Common myeloid progenitor, CD34-positive (primary cell): ENCODE measurements at regions of chr6 and their contacts with region 1.

Region 1: GRCh38 chr6:35202066-35202546 is 11.7 kb upstream of the SCUBE3 start:
- DNase-seq: peak in 2 of 3 donors; percentile 21 to 22
- H3K4me3 ChIP-seq: no peak overlapping the region
- H3K27ac ChIP-seq: no peak overlapping the region
- H3K4me1 ChIP-seq: no peaks in the 10 kb centered on the region
- H3K27me3 ChIP-seq: peaks cover 0 to 13% (median 8%) of the 10 kb centered on the region in 5 experiments

Region 2: DNA sequence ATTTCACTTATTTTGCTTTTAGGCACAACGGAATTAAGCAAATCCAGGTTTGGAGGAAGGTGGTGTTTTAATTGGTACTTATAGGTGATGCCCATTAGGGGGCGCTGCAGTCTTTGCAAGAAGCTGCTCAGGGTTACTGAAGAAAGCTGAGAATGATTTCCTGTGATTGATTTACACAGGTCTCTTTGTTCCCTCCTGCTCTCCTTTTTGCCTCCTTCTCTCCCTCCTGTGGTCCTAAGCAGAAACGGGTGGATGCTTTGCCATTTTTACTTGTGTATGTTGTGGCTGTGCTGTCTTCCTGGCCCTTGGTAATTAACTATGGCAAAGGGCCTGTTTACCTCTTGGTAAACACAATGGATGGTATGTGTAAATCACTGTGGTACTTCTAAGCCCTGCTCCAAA is 215.3 kb before region 1 on chr6:
- CTCF ChIA-PET with region 1: interaction called, 34 read pairs
- POLR2A ChIA-PET with region 1: no interaction called
- DNase-seq: peak; percentile 76 to 89 (median 88)
- H3K4me3 ChIP-seq: no peak overlapping the region
- H3K27ac ChIP-seq: no peak overlapping the region
- H3K4me1 ChIP-seq: peaks cover 0 to 6% (median 5%) of the 10 kb centered on the region in 4 experiments
- H3K27me3 ChIP-seq: no peaks in the 10 kb centered on the region

Region 3: DNA sequence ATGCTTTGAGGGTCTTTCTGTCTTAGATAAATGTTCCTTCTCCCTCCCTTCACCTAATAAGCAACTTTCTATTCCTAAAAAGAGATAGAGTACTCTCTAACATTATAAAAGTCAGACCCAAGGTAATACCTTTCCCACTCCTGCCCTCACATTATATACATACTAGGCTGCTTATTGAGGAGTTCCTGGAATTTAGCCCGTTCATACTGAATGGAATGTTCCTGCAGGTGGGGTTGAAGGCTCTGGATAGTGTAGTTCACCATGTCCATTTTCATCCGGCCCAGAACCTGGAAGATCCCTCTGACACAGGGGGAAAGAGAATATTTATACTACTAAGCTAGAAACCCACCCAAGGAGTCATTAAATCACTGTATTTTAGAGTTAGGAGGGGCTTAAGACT is 81.4 kb before region 1 on chr6:
- CTCF ChIA-PET with region 1: no interaction called
- POLR2A ChIA-PET with region 1: no interaction called
- DNase-seq: no peak
- H3K4me3 ChIP-seq: no peak overlapping the region
- H3K27ac ChIP-seq: no peak overlapping the region
- H3K4me1 ChIP-seq: no peaks in the 10 kb centered on the region
- H3K27me3 ChIP-seq: no peaks in the 10 kb centered on the region

Region 4: DNA sequence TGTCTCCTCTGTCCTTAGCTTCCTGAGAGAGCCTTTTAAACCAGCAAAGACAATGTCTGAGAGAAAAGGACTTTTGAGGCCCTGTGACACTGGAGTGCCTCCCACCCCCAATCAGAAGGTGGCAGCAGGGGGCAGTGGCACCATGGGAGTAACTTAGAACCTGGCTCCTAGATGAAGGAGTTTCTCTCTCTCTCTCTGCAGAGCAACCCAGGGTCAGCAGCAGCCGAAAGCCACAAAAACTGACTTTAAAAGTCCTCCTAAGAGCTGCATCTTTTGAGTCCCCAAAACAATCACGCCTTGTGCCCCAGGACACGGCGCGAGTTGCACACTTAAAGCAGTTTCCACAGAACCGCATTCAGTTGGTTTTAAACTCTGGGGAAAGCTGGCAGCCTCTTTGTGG is 55.7 kb before region 1 on chr6:
- CTCF ChIA-PET with region 1: interaction called, 48 read pairs
- POLR2A ChIA-PET with region 1: no interaction called
- DNase-seq: peak; percentile 49 to 69 (median 64)
- H3K4me3 ChIP-seq: no peak overlapping the region
- H3K27ac ChIP-seq: no peak overlapping the region
- H3K4me1 ChIP-seq: peaks cover 0 to 7% (median 5%) of the 10 kb centered on the region in 4 experiments
- H3K27me3 ChIP-seq: peaks cover 0 to 4% (median 0%) of the 10 kb centered on the region in 5 experiments

Region 5: GRCh38 chr6:35224720-35225119 is 22.6 kb after region 1 on chr6:
- CTCF ChIA-PET with region 1: interaction called, 20 read pairs
- POLR2A ChIA-PET with region 1: no interaction called
- DNase-seq: no peak
- H3K4me3 ChIP-seq: no peak overlapping the region
- H3K27ac ChIP-seq: no peak overlapping the region
- H3K4me1 ChIP-seq: no peaks in the 10 kb centered on the region
- H3K27me3 ChIP-seq: no peaks in the 10 kb centered on the region

Region 6: DNA sequence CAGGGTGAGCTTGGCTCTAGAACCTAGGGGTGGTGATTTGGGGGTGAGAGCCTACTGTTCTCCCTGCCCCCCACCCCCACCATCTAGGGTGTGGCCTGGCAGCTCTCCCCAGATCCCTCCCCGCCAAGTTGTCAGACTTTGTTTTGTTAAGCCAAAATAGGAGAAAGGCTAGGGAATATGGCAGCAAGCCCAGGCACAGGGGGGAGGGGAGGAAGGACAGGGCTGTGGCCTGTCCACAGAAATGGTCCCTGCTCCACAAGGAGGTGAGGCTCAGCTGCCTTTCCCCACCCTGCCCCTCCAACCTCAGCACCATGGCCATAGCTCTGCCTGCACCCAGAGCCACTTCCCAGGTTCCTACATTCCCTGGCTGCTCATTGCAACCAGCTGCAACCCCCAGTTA is 28.8 kb after region 1 on chr6:
- CTCF ChIA-PET with region 1: interaction called, 20 read pairs
- POLR2A ChIA-PET with region 1: no interaction called
- DNase-seq: no peak
- H3K4me3 ChIP-seq: no peak overlapping the region
- H3K27ac ChIP-seq: no peak overlapping the region
- H3K4me1 ChIP-seq: no peaks in the 10 kb centered on the region
- H3K27me3 ChIP-seq: no peaks in the 10 kb centered on the region